WTC11 (cell line): ENCODE measurements at regions of chr6 and their contacts with region 1.

Region 1: DNA sequence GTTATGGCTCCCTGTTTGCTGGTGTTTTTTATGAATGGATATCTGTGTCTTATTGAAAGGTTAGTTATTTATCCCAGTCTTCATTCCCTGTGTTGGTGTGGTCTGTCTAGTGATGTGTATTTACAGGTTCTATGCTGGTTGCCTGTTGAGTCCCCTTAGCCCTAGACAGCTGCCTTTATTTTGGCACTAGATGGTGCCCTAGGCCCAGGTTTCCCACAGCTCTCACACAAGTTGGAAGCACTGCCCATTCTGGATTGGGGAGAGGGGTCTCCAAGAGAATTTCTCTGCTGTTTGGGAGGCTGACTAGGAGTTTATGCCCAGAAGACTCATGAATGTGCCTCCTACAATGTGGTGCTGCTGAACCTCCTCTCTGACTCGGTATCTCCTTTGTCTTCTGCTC is 12.4 kb downstream of the GRM1 start:
- DNase-seq: peak; percentile 62
- ATAC-seq: peak; percentile 100
- H3K4me3 Mint-ChIP-seq: no peak overlapping the region
- H3K27ac Mint-ChIP-seq: no peak overlapping the region
- H3K4me1 Mint-ChIP-seq: peaks cover 4% of the 10 kb centered on the region; the same call in 1 of the 2 replicates
- H3K27me3 Mint-ChIP-seq: no peaks in the 10 kb centered on the region; the same call in 1 of the 2 replicates
- CTCF ChIP-seq: peak; percentile 17; the same call in 1 of the 2 replicates

Region 2: DNA sequence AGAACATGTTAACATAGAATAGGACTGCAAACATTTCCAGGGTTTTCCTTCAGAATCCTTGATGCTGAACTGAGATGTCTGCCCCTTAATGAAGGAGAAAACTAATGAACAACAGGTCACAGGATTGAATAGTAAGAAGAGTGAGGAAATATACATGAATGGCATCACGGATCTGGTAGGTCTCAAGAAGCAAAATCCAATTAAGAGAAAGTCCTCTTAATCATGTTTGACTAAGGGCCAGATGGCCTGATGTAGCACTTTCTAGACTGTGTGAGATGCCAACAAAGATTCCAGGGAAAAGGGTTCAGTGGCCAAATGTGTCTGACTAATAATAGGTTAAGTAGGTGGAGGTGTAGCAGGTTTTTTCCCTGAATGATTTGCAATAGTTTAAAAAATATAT is 63.4 kb before region 1 on chr6:
- CTCF ChIA-PET with region 1: no interaction called
- POLR2A ChIA-PET with region 1: no interaction called
- DNase-seq: no peak
- ATAC-seq: no peak
- H3K4me3 Mint-ChIP-seq: no peak overlapping the region
- H3K27ac Mint-ChIP-seq: no peak overlapping the region
- H3K4me1 Mint-ChIP-seq: no peaks in the 10 kb centered on the region
- H3K27me3 Mint-ChIP-seq: no peaks in the 10 kb centered on the region
- CTCF ChIP-seq: no peak

Region 3: DNA sequence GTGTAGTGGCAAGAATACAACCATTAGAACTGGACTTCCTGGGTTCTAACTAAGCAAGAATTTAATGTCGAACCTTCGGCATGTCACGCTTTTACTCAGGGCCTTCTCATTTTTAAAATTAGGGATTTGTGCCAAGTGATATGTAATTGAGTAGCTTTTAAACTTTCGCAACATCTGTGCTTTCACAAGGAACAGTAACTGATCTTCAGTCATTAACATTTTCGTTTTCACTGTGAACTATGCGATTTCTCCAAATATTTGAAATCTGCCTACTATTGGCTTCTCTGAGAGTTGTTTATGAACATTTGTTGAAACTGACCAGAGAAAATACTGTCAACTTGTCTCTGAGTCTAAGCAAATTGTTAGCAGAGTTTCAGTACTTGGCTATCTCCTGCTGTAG is 15.2 kb after region 1 on chr6:
- CTCF ChIA-PET with region 1: no interaction called
- POLR2A ChIA-PET with region 1: no interaction called
- DNase-seq: no peak
- ATAC-seq: no peak
- H3K4me3 Mint-ChIP-seq: no peak overlapping the region
- H3K27ac Mint-ChIP-seq: no peak overlapping the region
- H3K4me1 Mint-ChIP-seq: no peaks in the 10 kb centered on the region
- H3K27me3 Mint-ChIP-seq: no peaks in the 10 kb centered on the region
- CTCF ChIP-seq: no peak

Region 4: GRCh38 chr6:146700078-146700686 is 658.9 kb after region 1 on chr6:
- CTCF ChIA-PET with region 1: interaction called, 12 read pairs
- POLR2A ChIA-PET with region 1: no interaction called
- DNase-seq: peak; percentile 17
- ATAC-seq: peak; percentile 81
- H3K4me3 Mint-ChIP-seq: no peak overlapping the region
- H3K27ac Mint-ChIP-seq: no peak overlapping the region
- H3K4me1 Mint-ChIP-seq: peaks cover 3% of the 10 kb centered on the region; the same call in 1 of the 2 replicates
- H3K27me3 Mint-ChIP-seq: no peaks in the 10 kb centered on the region
- CTCF ChIP-seq: peak; percentile 49; the same call in 1 of the 2 replicates